Activated naive CD4-positive, alpha-beta T cell treated with anti-CD3 and anti-CD28 coated beads for 36 hours (primary cell): ENCODE measurements at regions of chr15 and their contacts with region 1.

Region 1: DNA sequence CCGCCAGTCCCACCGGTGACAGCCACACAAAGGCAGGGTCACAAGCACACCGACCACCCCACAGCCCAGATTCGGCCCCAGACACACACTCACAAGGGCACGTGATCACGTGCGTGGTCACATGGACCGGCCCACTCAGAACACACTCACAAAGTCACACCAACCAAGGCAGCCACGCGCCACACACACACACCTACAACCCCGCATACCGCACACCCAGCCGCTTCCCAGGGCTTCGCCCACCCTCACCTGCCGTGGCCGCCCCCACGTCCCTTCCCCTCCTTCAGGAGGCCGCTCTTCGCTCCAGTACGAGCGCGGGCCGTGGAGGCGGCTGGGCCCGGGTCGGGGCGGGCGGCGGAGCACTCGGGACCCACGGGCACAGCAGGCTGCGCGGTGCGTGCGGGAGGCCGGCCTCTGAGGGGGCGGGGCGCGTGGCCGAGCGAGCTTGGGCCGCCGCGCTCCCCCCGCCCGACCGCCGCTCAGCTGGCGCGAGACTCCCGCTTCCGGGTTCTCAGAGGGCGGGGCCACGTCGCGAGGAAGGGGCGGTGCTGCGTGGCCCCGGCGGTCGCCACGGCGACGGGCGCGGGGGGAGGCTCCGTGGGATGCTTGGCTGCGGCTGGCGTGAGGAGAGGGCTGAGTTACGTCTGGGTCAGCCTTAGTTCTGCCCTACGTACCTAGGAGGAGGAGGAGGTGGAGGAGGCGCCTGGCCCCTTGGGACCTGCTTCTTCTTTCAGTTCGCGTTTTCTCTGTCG is at the start of gene SPG21:
- DNase-seq: peak; percentile 88
- H3K4me3 Mint-ChIP-seq: peak within 1 kb of the TSS; percentile 94
- H3K27ac Mint-ChIP-seq: peak within 1 kb of the TSS; percentile 82
- H3K4me1 Mint-ChIP-seq: peaks cover 36% of the 10 kb centered on the region
- H3K27me3 Mint-ChIP-seq: no peaks in the 10 kb centered on the region
- total RNA-seq, gene SPG21: 67.7 to 68.0 TPM

Region 2: DNA sequence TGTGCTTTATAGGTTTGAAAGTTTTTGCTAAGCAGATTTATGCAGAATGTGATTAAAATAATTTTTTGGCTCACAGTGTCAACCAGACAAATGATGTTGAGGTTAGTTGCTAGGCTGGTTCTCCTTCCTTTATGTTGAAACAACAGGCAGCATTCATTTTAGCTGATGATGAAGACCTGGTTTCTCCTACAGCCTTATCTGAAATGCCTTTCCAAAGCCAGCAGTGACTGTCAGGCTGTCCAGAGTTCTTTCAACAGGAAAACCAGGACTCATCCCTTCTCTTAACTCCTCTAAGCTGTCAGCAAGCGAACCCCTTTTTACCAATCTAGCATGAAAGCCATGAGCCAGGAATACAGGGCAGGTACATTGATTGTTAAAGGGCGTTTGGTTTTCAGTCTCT is 445.1 kb before region 1 on chr15:
- CTCF ChIA-PET with region 1: no interaction called
- intact Hi-C with region 1: no loop called
- DNase-seq: no peak
- H3K4me3 Mint-ChIP-seq: no peak overlapping the region
- H3K27ac Mint-ChIP-seq: no peak overlapping the region
- H3K4me1 Mint-ChIP-seq: peaks cover 57% of the 10 kb centered on the region
- H3K27me3 Mint-ChIP-seq: no peaks in the 10 kb centered on the region

Region 3: GRCh38 chr15:64841258-64842095 is 148.1 kb before region 1 on chr15 and contains the start of gene PLEKHO2:
- CTCF ChIA-PET with region 1: no interaction called
- intact Hi-C with region 1: loop called (anchors 2 kb)
- DNase-seq: peak; percentile 95
- H3K4me3 Mint-ChIP-seq: peak within 1 kb of the TSS; percentile 96
- H3K27ac Mint-ChIP-seq: peak within 1 kb of the TSS; percentile 83
- H3K4me1 Mint-ChIP-seq: peaks cover 60% of the 10 kb centered on the region
- H3K27me3 Mint-ChIP-seq: no peaks in the 10 kb centered on the region
- total RNA-seq, gene PLEKHO2: 12.5 to 12.7 TPM

Region 4: GRCh38 chr15:64905119-64905831 is 84.3 kb before region 1 on chr15:
- CTCF ChIA-PET with region 1: no interaction called
- intact Hi-C with region 1: loop called (anchors 5 kb)
- DNase-seq: peak; percentile 89
- H3K4me3 Mint-ChIP-seq: peak overlapping the region; percentile 64
- H3K27ac Mint-ChIP-seq: peak overlapping the region; percentile 51
- H3K4me1 Mint-ChIP-seq: peaks cover 35% of the 10 kb centered on the region
- H3K27me3 Mint-ChIP-seq: no peaks in the 10 kb centered on the region